K562 (cell line): ENCODE measurements at regions of chr12 and their contacts with region 1.

Region 1: DNA sequence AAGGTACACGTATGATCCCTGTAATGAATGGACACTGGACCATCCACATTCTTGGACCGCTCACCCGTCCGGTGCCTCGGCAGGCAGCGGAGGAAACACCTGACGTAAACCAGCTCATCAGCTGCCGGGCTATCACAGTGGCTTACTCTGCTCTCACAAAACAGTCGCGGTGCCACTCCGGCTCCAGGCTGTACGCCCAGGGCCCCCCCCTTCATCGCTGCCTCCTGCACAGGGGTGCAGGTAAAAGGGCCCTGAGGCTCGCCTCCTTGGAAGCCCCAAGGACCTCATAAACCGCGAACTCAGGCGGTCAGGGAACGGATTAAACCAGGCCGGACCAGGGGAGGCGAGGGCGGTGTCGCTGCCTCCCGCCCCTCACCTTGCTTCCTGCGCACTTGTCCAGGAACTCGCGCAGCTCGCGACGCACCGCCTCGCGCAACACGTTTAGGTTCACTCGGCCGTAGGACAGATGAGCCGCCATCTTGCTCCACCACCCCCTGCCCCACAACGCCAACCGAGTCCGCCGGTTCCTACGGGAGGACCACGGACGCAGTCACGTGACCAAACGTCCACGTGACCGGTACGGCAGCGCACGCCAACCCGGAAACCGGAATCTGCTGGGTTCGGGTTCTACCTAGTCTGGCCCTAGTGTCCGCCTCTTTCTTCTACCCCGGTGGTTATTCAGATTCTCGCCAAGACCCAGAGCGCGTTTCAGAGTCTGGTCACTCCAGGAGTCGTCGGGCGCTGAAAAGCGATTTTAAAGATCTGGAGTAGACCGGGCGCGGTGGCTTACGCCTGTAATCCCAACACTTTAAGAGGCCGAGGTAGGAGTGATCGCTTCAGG is at the start of gene VPS33A:
- DNase-seq: peak; percentile 95 to 98 (median 96)
- ATAC-seq: peak; percentile 95
- H3K4me3 ChIP-seq: peak within 1 kb of the TSS; percentile 85
- H3K27ac ChIP-seq: peak within 1 kb of the TSS; percentile 79
- H3K4me1 ChIP-seq: peaks cover 0 to 12% of the 10 kb centered on the region in 2 experiments; a peak in 2 of 5 replicates
- H3K27me3 ChIP-seq: no peaks in the 10 kb centered on the region
- CTCF ChIP-seq: no peak
- EP300 ChIP-seq: peak; percentile 46
- POLR2A ChIP-seq: peak; percentile 89
- RAD21 ChIP-seq: no peak
- polyA plus RNA-seq, gene VPS33A: 10.6 to 14.9 TPM

Region 2: DNA sequence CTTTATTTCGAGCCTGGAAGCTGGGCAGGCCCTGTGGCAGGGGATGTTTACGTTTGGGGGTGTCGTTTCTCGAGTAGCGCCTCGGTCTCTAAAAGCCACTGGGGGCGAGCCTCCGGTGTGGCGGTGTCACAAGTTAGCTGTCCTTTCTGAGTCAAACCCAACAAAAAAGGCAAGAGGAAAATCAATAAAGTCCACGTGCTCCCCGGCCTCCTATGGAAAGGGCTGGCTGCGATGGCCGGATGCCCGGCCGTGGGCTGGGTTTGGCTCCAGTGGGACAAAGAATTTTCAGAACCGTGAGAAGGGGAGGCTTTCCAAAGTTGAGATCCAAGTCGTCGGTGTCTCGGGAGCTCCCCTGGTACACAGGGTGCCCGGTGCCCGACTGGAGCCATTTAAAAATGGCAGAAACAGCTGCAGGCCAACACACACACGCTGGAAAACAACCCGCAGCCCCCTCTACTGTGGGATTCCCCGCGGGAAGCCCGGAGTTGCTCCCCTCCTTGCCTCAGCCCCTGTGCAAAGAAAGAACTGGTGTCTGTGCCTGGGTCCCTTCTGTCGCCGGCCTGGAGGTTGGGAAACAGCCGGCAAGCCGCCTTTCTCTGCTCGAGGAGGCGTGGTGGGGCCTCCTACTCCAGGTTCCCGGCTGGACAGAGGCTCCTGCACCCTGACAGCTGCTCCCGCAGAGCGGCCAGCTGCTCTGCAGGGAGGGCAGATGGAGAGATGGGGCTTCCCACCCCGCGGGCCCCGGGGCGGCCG is 242.6 kb before region 1 on chr12:
- CTCF ChIA-PET with region 1: no interaction called
- POLR2A ChIA-PET with region 1: no interaction called
- in situ Hi-C with region 1: no loop called
- intact Hi-C with region 1: no loop called
- DNase-seq: peak; percentile 65 to 72 (median 69)
- ATAC-seq: peak; percentile 76
- H3K4me3 ChIP-seq: peak overlapping the region; percentile 73
- H3K27ac ChIP-seq: peak overlapping the region; percentile 93
- H3K4me1 ChIP-seq: peaks cover 17 to 45% of the 10 kb centered on the region in 2 experiments
- H3K27me3 ChIP-seq: no peaks in the 10 kb centered on the region; a peak in 1 of 5 replicates
- CTCF ChIP-seq: no peak
- EP300 ChIP-seq: no peak
- POLR2A ChIP-seq: no peak; the same call in 1 of the 2 replicates
- RAD21 ChIP-seq: no peak

Region 3: DNA sequence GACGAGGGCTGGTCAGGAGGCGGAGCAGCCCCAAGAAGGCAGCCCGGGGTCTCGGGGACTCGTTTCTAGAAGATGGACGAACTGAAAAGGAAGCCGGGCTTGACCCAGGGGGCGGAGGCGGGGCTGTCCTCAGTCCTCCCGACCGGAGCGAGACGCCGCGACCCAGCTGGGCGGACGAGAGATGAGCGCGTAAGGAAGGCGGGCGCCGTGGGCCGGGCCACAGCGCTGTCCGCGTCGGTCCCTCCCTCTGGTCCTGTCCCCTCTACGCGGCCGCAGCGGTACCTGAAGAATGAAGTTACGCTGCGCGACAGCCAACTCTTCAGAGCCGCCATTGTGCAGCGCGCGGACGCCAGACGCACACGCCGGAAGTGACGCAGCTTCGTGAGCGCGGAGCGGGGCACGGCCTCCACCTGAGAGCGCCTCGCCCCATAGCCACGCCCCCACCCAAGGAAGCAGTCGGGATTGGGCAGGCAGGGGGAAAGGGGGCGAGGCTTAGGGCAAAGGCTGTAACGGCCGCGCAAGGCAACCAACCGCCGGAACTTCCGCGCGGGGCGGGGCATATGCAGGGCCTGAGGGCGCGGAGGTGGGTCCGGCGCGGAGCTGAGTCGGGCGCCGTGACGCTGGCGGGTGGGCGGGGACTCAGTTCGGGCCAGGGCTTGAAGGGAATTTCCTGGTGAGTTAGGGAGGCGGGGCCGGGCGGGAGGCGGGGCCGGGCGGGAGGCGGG is 40.3 kb before region 1 on chr12 and contains the start of gene DIABLO:
- CTCF ChIA-PET with region 1: no interaction called
- POLR2A ChIA-PET with region 1: interaction called, 4 read pairs
- in situ Hi-C with region 1: no loop called
- intact Hi-C with region 1: loop called (anchors 5 kb)
- DNase-seq: peak; percentile 95 to 99 (median 97)
- ATAC-seq: peak; percentile 98
- H3K4me3 ChIP-seq: peak within 1 kb of the TSS; percentile 97
- H3K27ac ChIP-seq: peak within 1 kb of the TSS; percentile 96
- H3K4me1 ChIP-seq: peaks cover 21 to 42% of the 10 kb centered on the region in 2 experiments
- H3K27me3 ChIP-seq: no peaks in the 10 kb centered on the region
- CTCF ChIP-seq: no peak
- EP300 ChIP-seq: peak; percentile 40; the same call in 1 of the 2 replicates
- POLR2A ChIP-seq: peak; percentile 98
- RAD21 ChIP-seq: no peak
- polyA plus RNA-seq, gene DIABLO: 37.3 to 57.9 TPM